HepG2 (cell line): ENCODE measurements at regions of chr14 and their contacts with region 1.

Region 1: DNA sequence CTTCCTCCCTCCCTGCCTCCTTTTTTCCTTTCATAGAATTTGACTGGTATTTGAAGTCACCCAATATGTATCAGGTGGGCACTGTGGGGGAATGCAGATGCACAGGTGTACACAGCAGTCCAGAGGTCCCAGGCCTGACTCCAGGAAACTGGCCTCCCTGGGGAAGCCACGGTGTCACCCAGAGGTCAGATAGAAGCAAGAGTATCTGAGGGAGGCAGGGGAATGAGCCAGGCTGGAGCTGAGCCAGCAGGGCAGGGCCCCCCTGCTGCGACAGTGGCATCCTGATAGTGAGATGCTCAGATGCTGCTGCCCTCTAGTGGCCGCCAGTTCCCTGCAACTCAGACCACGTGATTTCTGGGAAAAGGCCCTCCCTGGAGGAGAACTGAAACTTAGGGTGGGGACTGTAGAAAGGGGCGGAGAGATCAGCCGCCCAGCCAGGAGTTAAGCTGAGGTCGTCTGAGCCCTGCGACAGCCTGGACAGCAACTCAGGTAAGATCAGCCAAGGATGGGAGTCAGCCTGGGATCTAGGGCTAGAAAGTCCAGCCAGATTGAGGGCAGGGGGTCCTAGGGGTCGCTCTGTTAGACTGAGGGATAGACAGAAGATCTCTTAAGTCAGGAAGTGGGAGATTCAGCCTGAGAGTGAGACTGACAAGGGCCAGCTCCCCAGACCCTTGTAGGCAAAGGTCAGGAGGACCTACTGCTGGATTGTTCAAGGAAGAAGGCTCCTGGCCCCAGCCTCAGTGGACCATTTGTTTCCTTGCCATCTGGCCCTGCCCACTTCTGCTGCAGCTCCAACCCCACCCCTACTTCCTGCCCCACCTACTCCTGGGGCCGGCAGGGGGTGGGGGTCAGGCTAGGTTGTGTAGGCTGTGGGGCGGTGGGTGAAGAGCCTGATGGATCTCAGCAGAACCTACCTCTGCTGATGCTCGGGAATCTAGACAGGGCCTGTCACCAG is at the start of gene IRF9:
- DNase-seq: peak; percentile 99
- ATAC-seq: peak; percentile 92
- H3K4me3 ChIP-seq: peak within 1 kb of the TSS; percentile 50 to 78 (median 64)
- H3K27ac ChIP-seq: peak within 1 kb of the TSS; percentile 62
- H3K4me1 ChIP-seq: peaks cover 28% of the 10 kb centered on the region
- H3K27me3 ChIP-seq: no peaks in the 10 kb centered on the region; a peak in 1 of 5 replicates
- CTCF ChIP-seq: peak; percentile 100
- EP300 ChIP-seq: peak; percentile 55 to 85; a peak in 3 of 4 replicates
- POLR2A ChIP-seq: peak in 1 of 2 experiments; percentile 66; a peak in 2 of 4 replicates
- RAD21 ChIP-seq: peak; percentile 99
- total RNA-seq, gene IRF9: 13.8 and 14.9 TPM in 2 replicates

Region 2: DNA sequence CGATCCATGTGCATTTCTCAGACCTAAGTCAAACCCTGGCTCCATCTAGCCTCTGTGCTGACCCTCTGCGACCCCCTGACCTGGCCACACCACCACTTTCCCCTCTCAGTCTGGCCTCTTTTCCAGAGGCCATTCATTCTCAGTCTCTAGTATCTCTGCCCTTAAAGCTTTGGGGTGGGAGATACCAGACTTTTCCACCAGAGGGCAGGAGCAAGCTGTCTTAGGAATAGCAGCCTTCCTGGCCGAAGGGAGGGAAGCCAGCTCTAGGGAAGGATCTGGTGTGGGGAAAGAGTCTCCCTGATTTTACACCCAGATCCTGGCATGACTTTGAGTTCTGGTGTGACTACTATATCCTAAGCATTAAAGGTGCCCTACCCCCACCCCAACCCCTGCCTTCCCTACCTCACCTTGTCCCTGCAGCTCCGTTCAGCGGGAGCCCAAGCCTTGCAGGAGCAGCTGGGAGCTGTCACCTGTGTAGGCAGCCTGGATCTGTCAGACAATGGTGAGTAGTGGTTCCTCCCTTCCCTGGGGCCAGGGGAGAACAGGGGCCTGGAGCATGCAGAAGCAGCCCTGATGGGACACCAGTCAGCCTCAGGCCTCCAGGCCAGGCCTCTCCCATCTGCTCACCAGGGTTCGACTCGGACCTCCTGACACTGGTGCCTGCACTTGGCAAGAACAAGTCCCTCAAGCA is 102.7 kb before region 1 on chr14:
- CTCF ChIA-PET with region 1: interaction called, 9 read pairs
- POLR2A ChIA-PET with region 1: interaction called, 28 read pairs
- in situ Hi-C with region 1: loop called (anchors 5 kb)
- intact Hi-C with region 1: loop called (anchors 1 kb)
- DNase-seq: peak; percentile 89
- ATAC-seq: peak; percentile 84
- H3K4me3 ChIP-seq: no peak overlapping the region
- H3K27ac ChIP-seq: no peak overlapping the region
- H3K4me1 ChIP-seq: peaks cover 40% of the 10 kb centered on the region
- H3K27me3 ChIP-seq: peaks cover 19 to 48% of the 10 kb centered on the region in 2 experiments; a peak in 4 of 5 replicates
- CTCF ChIP-seq: peak; percentile 99
- EP300 ChIP-seq: no peak
- POLR2A ChIP-seq: no peak
- RAD21 ChIP-seq: peak; percentile 99

Region 3: GRCh38 chr14:24108336-24108874 is 52.7 kb before region 1 on chr14:
- CTCF ChIA-PET with region 1: interaction called, 12 read pairs
- POLR2A ChIA-PET with region 1: interaction called, 110 read pairs
- in situ Hi-C with region 1: no loop called
- intact Hi-C with region 1: loop called (anchors 1 kb)
- DNase-seq: no peak
- ATAC-seq: no peak
- H3K4me3 ChIP-seq: no peak overlapping the region
- H3K27ac ChIP-seq: no peak overlapping the region
- H3K4me1 ChIP-seq: peaks cover 60% of the 10 kb centered on the region
- H3K27me3 ChIP-seq: no peaks in the 10 kb centered on the region
- CTCF ChIP-seq: no peak
- EP300 ChIP-seq: no peak
- POLR2A ChIP-seq: no peak
- RAD21 ChIP-seq: no peak

Region 4: GRCh38 chr14:24141097-24141880 is 19.8 kb before region 1 on chr14 and contains the start of gene EMC9:
- CTCF ChIA-PET with region 1: interaction called, 6 read pairs
- POLR2A ChIA-PET with region 1: interaction called, 233 read pairs
- in situ Hi-C with region 1: no loop called
- intact Hi-C with region 1: loop called (anchors 1 kb)
- DNase-seq: peak; percentile 100
- ATAC-seq: peak; percentile 88
- H3K4me3 ChIP-seq: peak within 1 kb of the TSS; percentile 83 to 99 (median 95)
- H3K27ac ChIP-seq: peak within 1 kb of the TSS; percentile 86
- H3K4me1 ChIP-seq: peaks cover 77% of the 10 kb centered on the region
- H3K27me3 ChIP-seq: peaks cover 0 to 3% of the 10 kb centered on the region in 2 experiments; a peak in 1 of 5 replicates
- CTCF ChIP-seq: peak; percentile 53
- EP300 ChIP-seq: peak in 1 of 2 experiments; percentile 70; a peak in 2 of 4 replicates
- POLR2A ChIP-seq: peak in 1 of 2 experiments; percentile 88; a peak in 2 of 4 replicates
- RAD21 ChIP-seq: peak; percentile 84
- total RNA-seq, gene EMC9: 71.2 and 78.7 TPM in 2 replicates

Region 5: GRCh38 chr14:24179961-24180796 is 19.1 kb after region 1 on chr14:
- CTCF ChIA-PET with region 1: no interaction called
- POLR2A ChIA-PET with region 1: interaction called, 53 read pairs
- in situ Hi-C with region 1: no loop called
- intact Hi-C with region 1: no loop called
- DNase-seq: no peak
- ATAC-seq: no peak
- H3K4me3 ChIP-seq: no peak overlapping the region
- H3K27ac ChIP-seq: no peak overlapping the region
- H3K4me1 ChIP-seq: no peaks in the 10 kb centered on the region
- H3K27me3 ChIP-seq: no peaks in the 10 kb centered on the region
- CTCF ChIP-seq: no peak
- EP300 ChIP-seq: no peak
- POLR2A ChIP-seq: no peak
- RAD21 ChIP-seq: no peak

Region 6: GRCh38 chr14:24215495-24216344 is 54.6 kb after region 1 on chr14 and contains the start of gene MDP1:
- CTCF ChIA-PET with region 1: no interaction called
- POLR2A ChIA-PET with region 1: interaction called, 41 read pairs
- in situ Hi-C with region 1: no loop called
- intact Hi-C with region 1: loop called (anchors 1 kb)
- DNase-seq: peak; percentile 95
- ATAC-seq: peak; percentile 81
- H3K4me3 ChIP-seq: peak within 1 kb of the TSS; percentile 67 to 98 (median 81)
- H3K27ac ChIP-seq: peak within 1 kb of the TSS; percentile 72
- H3K4me1 ChIP-seq: peaks cover 39% of the 10 kb centered on the region
- H3K27me3 ChIP-seq: no peaks in the 10 kb centered on the region; a peak in 1 of 5 replicates
- CTCF ChIP-seq: peak; percentile 100
- EP300 ChIP-seq: peak in 1 of 2 experiments; percentile 74; a peak in 3 of 4 replicates
- POLR2A ChIP-seq: peak in 1 of 2 experiments; percentile 97; a peak in 2 of 4 replicates
- RAD21 ChIP-seq: peak; percentile 96
- total RNA-seq, gene MDP1: 48.7 and 66.0 TPM in 2 replicates

Region 7: GRCh38 chr14:24285351-24285750 is 124.2 kb after region 1 on chr14:
- CTCF ChIA-PET with region 1: no interaction called
- POLR2A ChIA-PET with region 1: no interaction called
- in situ Hi-C with region 1: no loop called
- intact Hi-C with region 1: no loop called
- DNase-seq: no peak
- ATAC-seq: peak; percentile 3; the same call in 1 of the 3 replicates
- H3K4me3 ChIP-seq: no peak overlapping the region
- H3K27ac ChIP-seq: no peak overlapping the region
- H3K4me1 ChIP-seq: no peaks in the 10 kb centered on the region
- H3K27me3 ChIP-seq: no peaks in the 10 kb centered on the region
- CTCF ChIP-seq: no peak
- EP300 ChIP-seq: no peak
- POLR2A ChIP-seq: no peak
- RAD21 ChIP-seq: no peak